Panc1 (cell line): ENCODE measurements at regions of chr5 and their contacts with region 1.

Region 1: DNA sequence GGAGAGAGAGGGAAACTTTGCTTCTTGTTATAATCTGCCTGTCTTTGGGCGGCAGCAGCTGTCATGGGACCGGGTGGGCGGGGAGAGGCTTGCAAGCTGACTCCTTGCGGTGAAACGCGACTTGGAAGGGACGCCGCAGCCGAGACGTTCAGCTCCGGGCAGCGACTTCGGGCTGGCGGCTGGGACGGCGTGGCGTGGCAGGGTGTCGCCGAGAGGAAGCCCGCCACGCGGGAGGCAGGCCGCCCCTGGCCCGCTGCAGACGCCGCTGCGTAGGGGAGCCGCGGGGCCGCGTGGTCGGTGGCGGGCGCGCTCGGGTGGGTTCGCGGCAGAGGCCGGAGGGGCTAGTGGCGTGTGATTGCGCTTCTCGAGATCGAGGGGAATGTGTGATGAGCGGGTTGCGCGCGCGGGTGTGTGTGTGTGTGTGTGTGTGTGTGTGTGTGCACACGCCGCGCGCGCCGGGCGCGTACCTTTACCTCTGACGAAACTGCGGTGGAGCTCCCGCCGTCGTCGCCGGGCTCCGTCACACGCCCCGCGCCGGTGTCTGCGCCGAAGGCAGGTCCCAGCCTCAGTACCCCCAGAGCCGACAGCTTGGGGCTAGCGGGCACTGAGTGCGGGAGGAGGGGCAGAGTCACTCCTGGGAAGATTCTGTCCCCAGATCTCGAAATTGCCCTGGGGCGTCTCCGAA is 1.7 kb downstream of the PPARGC1B start:
- DNase-seq: peak; percentile 48
- ATAC-seq: peak; percentile 77
- H3K4me3 ChIP-seq: peak overlapping the region; percentile 76 to 81
- H3K27ac ChIP-seq: peak overlapping the region; percentile 68
- H3K4me1 ChIP-seq: peaks cover 9% of the 10 kb centered on the region; the same call in 1 of the 2 replicates
- H3K27me3 ChIP-seq: no peaks in the 10 kb centered on the region
- CTCF ChIP-seq: no peak

Region 2: DNA sequence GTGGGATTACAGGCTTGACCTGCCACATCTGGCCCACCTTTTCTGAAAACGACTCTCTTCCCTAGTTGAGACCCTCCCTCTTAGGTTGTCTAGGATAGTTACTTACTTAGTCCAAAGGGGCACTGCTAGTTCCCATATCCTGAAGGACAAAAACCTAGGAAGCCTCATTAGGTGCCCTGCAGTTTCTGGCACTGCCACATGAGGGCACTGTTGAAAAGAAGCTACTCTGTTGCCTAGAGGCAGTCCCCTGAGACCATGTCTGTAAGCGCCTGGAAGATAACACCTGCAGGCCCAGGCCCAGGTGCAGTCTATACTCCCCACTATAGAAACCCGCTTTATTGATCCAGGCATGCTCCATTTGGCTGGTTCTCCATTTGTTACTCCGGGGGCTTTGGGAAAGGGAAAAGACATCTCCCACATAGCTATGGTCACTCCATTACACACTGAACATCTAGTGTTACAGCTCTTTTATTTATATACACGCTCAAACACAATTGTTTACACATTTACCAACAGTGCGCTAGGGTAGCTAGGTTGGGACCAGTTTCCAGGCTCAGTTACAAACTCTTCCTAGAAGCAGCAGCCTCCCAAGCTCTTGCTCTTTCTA is 75.1 kb before region 1 on chr5:
- CTCF ChIA-PET with region 1: interaction called, 12 read pairs
- POLR2A ChIA-PET with region 1: interaction called, 7 read pairs
- in situ Hi-C with region 1: no loop called
- intact Hi-C with region 1: no loop called
- DNase-seq: peak; percentile 35
- ATAC-seq: no peak
- H3K4me3 ChIP-seq: no peak overlapping the region
- H3K27ac ChIP-seq: no peak overlapping the region
- H3K4me1 ChIP-seq: no peaks in the 10 kb centered on the region
- H3K27me3 ChIP-seq: no peaks in the 10 kb centered on the region
- CTCF ChIP-seq: peak; percentile 82

Region 3: GRCh38 chr5:149765932-149766331 is 34.2 kb after region 1 on chr5:
- CTCF ChIA-PET with region 1: interaction called, 10 read pairs
- POLR2A ChIA-PET with region 1: no interaction called
- in situ Hi-C with region 1: no loop called
- intact Hi-C with region 1: no loop called
- DNase-seq: no peak
- ATAC-seq: no peak
- H3K4me3 ChIP-seq: no peak overlapping the region
- H3K27ac ChIP-seq: no peak overlapping the region
- H3K4me1 ChIP-seq: peaks cover 7% of the 10 kb centered on the region; the same call in 1 of the 2 replicates
- H3K27me3 ChIP-seq: no peaks in the 10 kb centered on the region
- CTCF ChIP-seq: peak; percentile 66; the same call in 1 of the 2 replicates

Region 4: DNA sequence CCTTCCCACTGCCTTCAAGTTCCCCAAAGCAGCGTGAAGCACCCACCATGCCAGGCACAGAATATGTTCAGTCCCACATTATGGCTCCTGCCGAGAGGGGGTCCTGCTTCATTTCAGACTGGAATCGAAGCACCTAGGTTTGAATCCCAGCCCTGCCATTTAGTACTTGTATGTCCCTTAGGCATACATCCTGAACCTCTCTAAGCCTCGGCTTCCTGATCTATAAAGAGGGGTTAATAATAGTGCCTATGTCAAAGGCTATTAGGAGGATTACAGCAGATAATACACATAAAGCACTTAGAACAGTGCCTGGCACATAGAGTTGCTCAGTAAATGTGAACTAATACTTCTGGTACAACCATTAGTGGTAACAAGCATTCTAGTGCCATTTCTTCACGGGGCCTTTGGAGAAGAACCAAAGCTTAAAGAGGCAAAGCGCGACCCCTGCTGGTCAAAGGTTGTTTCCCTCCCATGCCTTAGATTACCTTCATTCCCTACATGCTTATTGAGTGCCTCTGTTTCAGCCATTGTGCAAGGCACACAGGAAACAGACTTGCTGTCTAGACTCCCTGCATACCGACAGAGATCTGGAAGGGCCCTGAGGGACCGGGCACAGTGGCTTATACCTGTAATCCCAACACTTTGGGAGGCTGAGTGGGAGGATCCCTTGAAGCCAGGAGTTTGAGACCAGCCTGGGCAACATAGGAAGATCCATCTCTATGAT is 96.5 kb after region 1 on chr5:
- CTCF ChIA-PET with region 1: interaction called, 3 read pairs
- POLR2A ChIA-PET with region 1: no interaction called
- in situ Hi-C with region 1: loop called (anchors 5 kb)
- intact Hi-C with region 1: no loop called
- DNase-seq: peak; percentile 77
- ATAC-seq: peak; percentile 90
- H3K4me3 ChIP-seq: no peak overlapping the region
- H3K27ac ChIP-seq: no peak overlapping the region
- H3K4me1 ChIP-seq: no peaks in the 10 kb centered on the region
- H3K27me3 ChIP-seq: no peaks in the 10 kb centered on the region
- CTCF ChIP-seq: peak; percentile 88

Region 5: DNA sequence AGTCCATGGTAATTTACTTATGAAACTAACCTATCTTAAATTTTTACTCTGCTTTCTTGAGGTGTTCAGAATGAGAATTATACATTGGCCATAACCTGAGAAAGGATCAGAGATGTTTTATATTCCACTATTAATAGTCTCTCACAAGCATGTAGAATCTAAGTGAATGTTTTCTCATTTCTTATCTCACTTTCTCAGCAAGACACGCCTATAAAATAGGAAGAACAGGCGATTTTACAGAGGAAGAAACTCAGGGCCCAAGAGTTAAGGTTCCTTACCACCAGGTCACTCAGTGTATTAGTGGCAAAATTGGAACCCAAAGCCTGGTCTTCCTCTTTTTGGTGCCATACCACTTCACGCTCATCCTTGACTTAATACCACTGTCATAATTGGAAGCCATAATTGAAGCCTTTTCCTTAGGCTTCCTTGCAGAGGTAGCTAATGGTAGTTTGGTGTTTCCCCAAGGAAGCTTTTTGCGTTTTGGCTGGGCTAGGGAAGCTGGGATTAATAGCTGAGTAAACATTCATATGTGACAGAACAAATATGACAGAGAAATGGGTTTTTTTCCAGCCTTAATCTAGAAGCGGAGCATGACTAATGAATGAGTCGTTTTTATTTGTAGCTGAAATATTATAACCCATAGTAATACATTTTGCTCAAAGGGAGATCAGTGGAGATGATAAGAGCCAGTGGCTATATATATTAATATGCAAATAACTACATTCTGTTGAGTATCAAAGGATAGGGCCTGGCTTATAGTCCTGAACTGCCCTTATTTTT is 285.6 kb after region 1 on chr5:
- CTCF ChIA-PET with region 1: no interaction called
- POLR2A ChIA-PET with region 1: no interaction called
- in situ Hi-C with region 1: no loop called
- intact Hi-C with region 1: no loop called
- DNase-seq: peak; percentile 36
- ATAC-seq: peak; percentile 57
- H3K4me3 ChIP-seq: no peak overlapping the region
- H3K27ac ChIP-seq: no peak overlapping the region
- H3K4me1 ChIP-seq: peaks cover 15% of the 10 kb centered on the region
- H3K27me3 ChIP-seq: no peaks in the 10 kb centered on the region
- CTCF ChIP-seq: no peak